ENCODE measurements at regions of chr15 and their contacts with region 1.

Region 1: DNA sequence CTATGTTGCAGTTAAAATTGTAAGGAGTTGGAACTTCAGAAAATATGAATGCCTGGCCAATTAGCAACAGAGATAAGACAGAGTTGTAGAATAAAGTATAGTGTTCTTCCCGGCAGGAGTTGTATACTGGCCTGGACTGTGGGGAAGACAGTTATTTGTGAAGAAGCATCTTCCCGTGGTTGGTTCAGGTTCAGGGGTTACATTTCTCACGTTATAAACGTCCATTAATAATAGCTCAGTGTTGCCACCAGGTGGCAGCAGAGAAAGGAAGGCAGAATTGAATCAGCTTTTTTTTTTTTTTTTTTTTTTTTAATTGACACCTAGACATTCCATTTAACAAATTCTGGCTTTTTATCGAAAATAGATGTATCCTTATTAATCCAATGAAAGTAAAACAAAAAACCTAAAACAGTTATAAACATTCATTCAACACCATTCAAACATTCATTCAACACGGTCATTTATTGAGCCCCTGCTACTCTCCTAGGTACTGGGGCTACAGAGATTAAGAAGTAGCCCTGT is 66.4 kb upstream of the NR2E3 start:
- DNase-seq: peak in 2 of 3 donors; percentile 37 to 59
- ATAC-seq: peak; percentile 22 to 61 (median 54)
- H3K4me3 ChIP-seq: no peak overlapping the region
- H3K27ac ChIP-seq: no peak overlapping the region
- H3K4me1 ChIP-seq: peaks cover 0 to 24% (median 3%) of the 10 kb centered on the region in 4 donors
- H3K27me3 ChIP-seq: no peaks in the 10 kb centered on the region
- CTCF ChIP-seq: peak; percentile 57 to 85 (median 78)
- POLR2A ChIP-seq: no peak

Region 2: GRCh38 chr15:71800835-71801745 is 57.2 kb after region 1 on chr15:
- intact Hi-C with region 1: loop called in 1 of 2 experiments (anchors 10 kb)
- DNase-seq: peak in 1 of 3 donors; percentile 21
- ATAC-seq: peak; percentile 88 to 93 (median 91)
- H3K4me3 ChIP-seq: no peak overlapping the region
- H3K27ac ChIP-seq: no peak overlapping the region
- H3K4me1 ChIP-seq: no peaks in the 10 kb centered on the region
- H3K27me3 ChIP-seq: no peaks in the 10 kb centered on the region
- CTCF ChIP-seq: peak; percentile 75 to 96 (median 80)
- POLR2A ChIP-seq: no peak

Region 3: GRCh38 chr15:72155635-72156616 is 412.0 kb after region 1 on chr15:
- intact Hi-C with region 1: loop called in 1 of 2 experiments (anchors 10 kb)
- DNase-seq: peak; percentile 81 to 83 (median 83)
- ATAC-seq: peak; percentile 90 to 93 (median 92)
- H3K4me3 ChIP-seq: peak overlapping the region; percentile 24 to 60 (median 46)
- H3K27ac ChIP-seq: no peak overlapping the region
- H3K4me1 ChIP-seq: peaks cover 0 to 8% (median 0%) of the 10 kb centered on the region in 4 donors
- H3K27me3 ChIP-seq: no peaks in the 10 kb centered on the region
- CTCF ChIP-seq: peak; percentile 76 to 91 (median 82)
- POLR2A ChIP-seq: no peak